ENCODE measurements at regions of chr6 and their contacts with region 1.

Region 1: GRCh38 chr6:142885182-142885867 is 59.7 kb downstream of the HIVEP2 start:
- DNase-seq: peak; percentile 89
- ATAC-seq: peak; percentile 70
- H3K4me3 ChIP-seq: peak overlapping the region; percentile 57
- H3K27ac ChIP-seq: peak overlapping the region; percentile 75
- H3K4me1 ChIP-seq: peaks cover 38% of the 10 kb centered on the region
- H3K27me3 ChIP-seq: no peaks in the 10 kb centered on the region
- CTCF ChIP-seq: no peak
- EP300 ChIP-seq: peak; percentile 93 to 97
- POLR2A ChIP-seq: peak; percentile 49
- RAD21 ChIP-seq: peak; percentile 14; the same call in 1 of the 2 replicates

Region 2: GRCh38 chr6:142802124-142802523 is 83.2 kb before region 1 on chr6:
- CTCF ChIA-PET with region 1: interaction called, 4 read pairs
- POLR2A ChIA-PET with region 1: no interaction called
- RAD21 ChIA-PET with region 1: interaction called, 15 read pairs
- SMC1A ChIA-PET with region 1: interaction called, 38 read pairs
- in situ Hi-C with region 1: no loop called
- intact Hi-C with region 1: no loop called
- DNase-seq: no peak
- ATAC-seq: peak; percentile 44
- H3K4me3 ChIP-seq: no peak overlapping the region
- H3K27ac ChIP-seq: no peak overlapping the region
- H3K4me1 ChIP-seq: peaks cover 27% of the 10 kb centered on the region
- H3K27me3 ChIP-seq: no peaks in the 10 kb centered on the region
- CTCF ChIP-seq: no peak
- EP300 ChIP-seq: no peak
- POLR2A ChIP-seq: no peak
- RAD21 ChIP-seq: no peak

Region 3: GRCh38 chr6:142838821-142839685 is 46.3 kb before region 1 on chr6:
- CTCF ChIA-PET with region 1: interaction called, 25 read pairs
- POLR2A ChIA-PET with region 1: interaction called, 46 read pairs
- RAD21 ChIA-PET with region 1: interaction called, 90 read pairs
- SMC1A ChIA-PET with region 1: interaction called, 287 read pairs
- in situ Hi-C with region 1: no loop called
- intact Hi-C with region 1: loop called (anchors 1 kb)
- DNase-seq: no peak
- ATAC-seq: peak; percentile 45
- H3K4me3 ChIP-seq: no peak overlapping the region
- H3K27ac ChIP-seq: peak overlapping the region; percentile 71
- H3K4me1 ChIP-seq: peaks cover 42% of the 10 kb centered on the region
- H3K27me3 ChIP-seq: no peaks in the 10 kb centered on the region
- CTCF ChIP-seq: no peak
- EP300 ChIP-seq: peak; percentile 9 to 65; a peak in 2 of 4 replicates
- POLR2A ChIP-seq: no peak
- RAD21 ChIP-seq: no peak

Region 4: DNA sequence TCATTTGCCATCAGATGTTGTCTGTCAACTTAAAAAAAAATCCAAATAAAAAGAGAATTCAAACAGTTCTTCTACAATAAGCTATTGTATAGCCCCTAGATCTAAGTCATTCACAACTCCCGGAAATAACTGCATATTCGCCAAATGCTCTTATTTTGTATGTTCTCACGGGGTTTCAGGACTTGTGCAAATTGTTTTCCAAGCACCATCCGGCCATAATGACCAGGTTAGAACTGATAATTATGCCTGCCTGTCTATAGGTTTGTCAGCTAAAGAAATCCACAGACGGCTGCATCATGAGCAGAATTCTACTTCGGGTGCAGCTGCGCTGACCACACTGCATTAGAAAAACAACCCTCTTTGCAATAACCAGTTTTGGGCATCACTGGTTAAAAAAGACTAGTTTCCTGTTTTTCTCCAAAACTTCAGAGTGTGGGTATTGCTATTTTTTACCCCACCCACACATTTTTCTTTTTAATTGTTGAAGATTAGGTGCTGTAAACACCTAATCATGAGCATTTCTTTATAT is 28.0 kb before region 1 on chr6:
- CTCF ChIA-PET with region 1: interaction called, 17 read pairs
- POLR2A ChIA-PET with region 1: interaction called, 78 read pairs
- RAD21 ChIA-PET with region 1: interaction called, 150 read pairs
- SMC1A ChIA-PET with region 1: interaction called, 213 read pairs
- in situ Hi-C with region 1: no loop called
- intact Hi-C with region 1: loop called (anchors 1 kb)
- DNase-seq: no peak
- ATAC-seq: peak; percentile 58
- H3K4me3 ChIP-seq: peak overlapping the region; percentile 59; the same call in 1 of the 2 replicates
- H3K27ac ChIP-seq: peak overlapping the region; percentile 98
- H3K4me1 ChIP-seq: peaks cover 54% of the 10 kb centered on the region
- H3K27me3 ChIP-seq: no peaks in the 10 kb centered on the region
- CTCF ChIP-seq: no peak
- EP300 ChIP-seq: peak in 1 of 2 experiments; percentile 57; a peak in 1 of 4 replicates
- POLR2A ChIP-seq: 0 out of 2 replicates have a peak, but pooled peaks have one; percentile 3
- RAD21 ChIP-seq: no peak

Region 5: GRCh38 chr6:142902636-142903053 is 17.3 kb after region 1 on chr6:
- CTCF ChIA-PET with region 1: interaction called, 11 read pairs
- POLR2A ChIA-PET with region 1: interaction called, 18 read pairs
- RAD21 ChIA-PET with region 1: interaction called, 86 read pairs
- SMC1A ChIA-PET with region 1: interaction called, 86 read pairs
- in situ Hi-C with region 1: no loop called
- intact Hi-C with region 1: loop called (anchors 2 kb)
- DNase-seq: peak; percentile 67
- ATAC-seq: peak; percentile 79
- H3K4me3 ChIP-seq: no peak overlapping the region
- H3K27ac ChIP-seq: peak overlapping the region; percentile 63
- H3K4me1 ChIP-seq: peaks cover 16% of the 10 kb centered on the region; the same call in 1 of the 2 replicates
- H3K27me3 ChIP-seq: no peaks in the 10 kb centered on the region
- CTCF ChIP-seq: no peak
- EP300 ChIP-seq: peak; percentile 53 to 65; a peak in 2 of 4 replicates
- POLR2A ChIP-seq: no peak
- RAD21 ChIP-seq: no peak

Region 6: DNA sequence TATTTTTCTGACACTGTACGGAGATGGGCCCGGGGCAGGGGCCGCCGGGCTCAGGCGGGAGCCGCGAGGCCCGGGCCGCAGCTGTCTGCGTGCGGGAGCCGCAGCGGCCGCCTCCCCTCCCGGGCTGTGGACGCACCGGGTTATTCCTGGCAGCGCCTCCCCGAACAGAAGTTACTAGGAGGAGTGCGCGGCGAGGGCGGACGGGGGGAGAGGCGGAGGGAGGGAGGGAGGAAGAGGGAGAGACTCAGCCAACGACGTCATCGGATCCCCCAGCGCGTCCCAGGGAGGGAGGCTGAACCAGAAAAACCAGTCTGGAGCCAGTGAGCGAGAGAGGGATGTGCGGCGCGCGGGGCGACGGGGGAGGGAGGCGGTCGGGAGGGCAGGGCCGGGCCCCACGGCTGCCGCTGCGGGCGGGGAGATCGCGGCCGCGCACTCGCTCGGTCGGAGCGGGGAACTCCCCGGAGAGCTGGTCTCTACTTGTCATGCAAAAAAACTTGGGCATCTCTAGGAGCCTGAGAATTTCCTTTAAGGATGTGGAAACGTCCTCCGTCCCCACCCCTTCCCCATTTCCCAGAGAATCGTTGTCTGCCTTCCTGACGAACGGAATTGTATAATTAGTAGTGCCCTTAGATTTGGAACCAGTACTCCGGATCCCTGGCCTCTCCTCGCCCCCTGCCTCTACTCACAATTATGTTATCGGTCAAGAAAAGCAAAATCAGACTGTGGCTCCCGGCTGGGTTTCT is 61.0 kb after region 1 on chr6:
- CTCF ChIA-PET with region 1: interaction called, 3 read pairs
- POLR2A ChIA-PET with region 1: interaction called, 7 read pairs
- RAD21 ChIA-PET with region 1: interaction called, 51 read pairs
- SMC1A ChIA-PET with region 1: interaction called, 75 read pairs
- in situ Hi-C with region 1: no loop called
- intact Hi-C with region 1: loop called (anchors 1 kb)
- DNase-seq: no peak
- ATAC-seq: peak; percentile 51
- H3K4me3 ChIP-seq: peak overlapping the region; percentile 94
- H3K27ac ChIP-seq: peak overlapping the region; percentile 98
- H3K4me1 ChIP-seq: peaks cover 9% of the 10 kb centered on the region; the same call in 1 of the 2 replicates
- H3K27me3 ChIP-seq: no peaks in the 10 kb centered on the region
- CTCF ChIP-seq: no peak
- EP300 ChIP-seq: no peak; a peak in 1 of 4 replicates
- POLR2A ChIP-seq: peak; percentile 52; the same call in 1 of the 2 replicates
- RAD21 ChIP-seq: no peak